GM23248 (cell line): ENCODE measurements at regions of chr3 and their contacts with region 1.

Region 1: DNA sequence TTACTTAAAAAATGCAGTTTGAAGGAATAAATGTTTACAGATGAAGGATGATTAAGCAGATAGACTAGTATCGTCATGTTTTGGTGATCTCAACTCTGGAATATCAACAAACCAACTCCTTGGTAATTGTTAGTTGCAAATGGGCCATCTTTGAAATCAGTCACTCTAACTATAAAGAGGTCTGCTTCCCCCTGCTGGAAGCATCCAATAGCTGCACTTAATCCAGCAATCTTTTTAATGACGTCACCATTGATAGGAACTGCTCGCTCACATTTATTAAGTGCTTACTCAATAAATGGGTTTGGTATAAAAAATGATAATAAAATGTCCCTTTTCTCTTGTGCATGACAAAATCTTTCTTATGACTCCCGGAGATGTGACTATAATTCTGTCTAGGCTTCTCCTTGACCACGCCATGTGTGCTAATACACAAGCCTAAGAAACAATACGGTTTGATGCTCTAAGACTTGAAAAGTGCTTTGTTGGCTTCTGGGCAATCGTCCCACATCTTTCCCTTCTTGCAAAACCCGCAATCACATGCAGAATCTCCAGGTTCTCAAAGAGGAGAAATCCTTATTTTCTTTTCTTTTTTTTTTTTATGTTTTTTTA is 227.6 kb upstream of the POU1F1 start:
- DNase-seq: peak; percentile 91
- H3K4me3 ChIP-seq: no peak overlapping the region
- H3K27ac ChIP-seq: no peak overlapping the region
- H3K4me1 ChIP-seq: peaks cover 10% of the 10 kb centered on the region
- H3K27me3 ChIP-seq: 0 out of 2 replicates have a peak, but pooled peaks cover 5% of the 10 kb centered on the region

Region 2: GRCh38 chr3:87298111-87298718 is 205.8 kb before region 1 on chr3:
- in situ Hi-C with region 1: loop called (anchors 10 kb)
- DNase-seq: peak; percentile 59
- H3K4me3 ChIP-seq: no peak overlapping the region
- H3K27ac ChIP-seq: no peak overlapping the region
- H3K4me1 ChIP-seq: no peaks in the 10 kb centered on the region
- H3K27me3 ChIP-seq: no peaks in the 10 kb centered on the region

Region 3: GRCh38 chr3:87719060-87719459 is 215.1 kb after region 1 on chr3:
- in situ Hi-C with region 1: no loop called
- DNase-seq: no peak
- H3K4me3 ChIP-seq: no peak overlapping the region
- H3K27ac ChIP-seq: no peak overlapping the region
- H3K4me1 ChIP-seq: no peaks in the 10 kb centered on the region
- H3K27me3 ChIP-seq: no peaks in the 10 kb centered on the region

Region 4: DNA sequence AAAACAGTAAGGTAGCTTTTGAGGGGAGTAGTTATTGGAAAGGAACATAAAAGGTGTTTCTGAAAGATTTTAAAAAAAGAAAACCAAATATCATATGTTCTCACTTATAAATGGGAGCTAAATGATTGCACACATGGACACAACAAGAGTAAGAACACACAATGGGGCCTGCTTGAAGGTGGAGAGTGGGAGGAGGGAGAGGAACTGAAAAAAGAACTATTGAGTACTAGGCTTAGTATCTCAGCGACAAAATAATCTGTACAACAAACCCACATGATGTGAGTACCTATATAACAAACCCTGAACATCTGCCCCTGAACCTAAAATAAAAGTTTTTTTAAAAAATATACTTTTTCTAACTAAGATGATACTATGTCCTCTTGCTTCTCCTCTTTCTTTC is 416.5 kb after region 1 on chr3:
- in situ Hi-C with region 1: no loop called
- DNase-seq: no peak
- H3K4me3 ChIP-seq: no peak overlapping the region
- H3K27ac ChIP-seq: no peak overlapping the region
- H3K4me1 ChIP-seq: no peaks in the 10 kb centered on the region
- H3K27me3 ChIP-seq: no peaks in the 10 kb centered on the region